Heart left ventricle (tissue), 16 donors: ENCODE measurements at regions of chr22 and their contacts with region 1.

Region 1: DNA sequence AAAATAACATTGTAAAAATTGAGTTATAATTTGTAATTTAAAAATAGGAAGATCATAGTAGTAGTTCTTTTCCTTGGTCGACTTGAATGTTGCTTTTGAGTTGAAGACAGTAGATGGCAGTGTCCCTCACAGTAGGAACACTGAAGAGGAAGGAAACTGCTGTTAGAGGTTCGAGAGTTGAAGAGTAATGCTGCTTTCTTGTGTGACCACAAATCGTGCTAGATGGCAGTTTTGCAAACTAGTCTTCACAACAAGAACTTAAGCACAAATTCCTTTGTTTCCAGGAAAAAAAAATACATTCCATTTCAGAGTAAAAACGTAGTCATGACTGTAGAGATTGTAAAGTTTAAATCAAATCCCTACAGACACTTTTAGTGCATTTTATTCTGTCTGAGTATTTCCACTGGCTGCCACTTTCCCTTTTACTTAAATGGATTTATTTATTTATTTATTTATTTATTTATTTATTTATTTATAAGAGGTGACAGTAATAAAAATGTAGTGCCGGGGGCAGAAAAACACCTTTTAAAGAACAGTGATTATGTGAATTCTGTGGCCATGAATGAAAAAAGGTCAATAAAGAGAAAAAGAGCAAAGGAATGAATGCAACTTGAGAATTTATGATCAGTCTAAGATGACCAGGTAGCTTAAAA is 54.6 kb downstream of the SPECC1L start:
- DNase-seq: peak in 1 of 5 donors; percentile 36
- ATAC-seq: peak in 3 of 4 donors; percentile 79 to 89 (median 82)
- H3K4me3 ChIP-seq: no peak overlapping the region
- H3K27ac ChIP-seq: peak overlapping the region in 1 of 12 donors; percentile 54
- H3K4me1 ChIP-seq: peaks cover 0 to 38% (median 15%) of the 10 kb centered on the region in 12 donors
- H3K27me3 ChIP-seq: no peaks in the 10 kb centered on the region
- CTCF ChIP-seq: peak; percentile 61 to 88 (median 74)
- POLR2A ChIP-seq: no peak

Region 2: GRCh38 chr22:24270638-24271408 is 54.4 kb before region 1 on chr22 and contains the start of gene SPECC1L:
- intact Hi-C with region 1: loop called in 1 of 10 experiments (anchors 5 kb)
- DNase-seq: peak; percentile 93 to 98 (median 96)
- ATAC-seq: peak; percentile 91 to 98 (median 96)
- H3K4me3 ChIP-seq: peak within 1 kb of the TSS; percentile 61 to 99 (median 85)
- H3K27ac ChIP-seq: peak within 1 kb of the TSS; percentile 88 to 99 (median 95)
- H3K4me1 ChIP-seq: peaks cover 7 to 42% (median 32%) of the 10 kb centered on the region in 12 donors
- H3K27me3 ChIP-seq: no peaks in the 10 kb centered on the region
- CTCF ChIP-seq: peak in 10 of 12 donors; percentile 13 to 68 (median 38)
- POLR2A ChIP-seq: peak; percentile 76 to 96
- total RNA-seq, gene SPECC1L: 25.4 to 65.3 (median 52.8) TPM

Region 3: GRCh38 chr22:24359452-24360120 is 34.4 kb after region 1 on chr22:
- intact Hi-C with region 1: no loop called
- DNase-seq: no peak
- ATAC-seq: peak in 3 of 4 donors; percentile 30 to 45 (median 40)
- H3K4me3 ChIP-seq: no peak overlapping the region
- H3K27ac ChIP-seq: peak overlapping the region in 6 of 12 donors; percentile 10 to 41 (median 19)
- H3K4me1 ChIP-seq: peaks cover 0 to 22% (median 13%) of the 10 kb centered on the region in 12 donors
- H3K27me3 ChIP-seq: no peaks in the 10 kb centered on the region
- CTCF ChIP-seq: no peak
- POLR2A ChIP-seq: no peak

Region 4: DNA sequence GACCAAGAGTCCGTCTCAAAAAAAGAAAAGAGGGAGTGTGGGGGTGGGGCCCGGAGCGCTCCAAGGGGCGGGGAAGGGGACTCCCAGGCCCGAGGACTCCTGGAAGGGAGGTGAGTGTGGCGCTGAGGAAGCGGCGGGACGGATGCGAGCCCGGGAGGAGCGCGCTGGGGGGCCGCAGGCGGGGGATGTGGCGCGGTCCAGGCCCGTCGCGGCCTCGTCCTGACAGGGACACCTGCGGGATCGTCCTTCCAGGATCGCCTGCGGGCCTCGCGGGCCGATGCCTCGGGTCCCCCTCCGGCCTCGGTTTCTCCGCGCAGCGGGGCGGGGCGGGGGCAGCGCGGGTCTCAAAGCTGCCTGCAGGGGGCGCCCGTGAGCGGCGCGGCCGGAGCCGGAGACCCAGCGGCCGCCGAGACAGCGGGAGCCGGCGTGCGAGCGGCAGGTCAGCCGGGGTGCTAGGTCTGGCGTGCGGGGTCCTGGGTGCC is 98.3 kb after region 1 on chr22:
- intact Hi-C with region 1: loop called in 4 of 10 experiments (anchors 5 kb)
- DNase-seq: peak; percentile 62 to 88 (median 73)
- ATAC-seq: peak in 3 of 4 donors; percentile 18 to 80 (median 69)
- H3K4me3 ChIP-seq: peak overlapping the region; percentile 56 to 96 (median 71)
- H3K27ac ChIP-seq: peak overlapping the region in 10 of 12 donors; percentile 36 to 88 (median 70)
- H3K4me1 ChIP-seq: peaks cover 0 to 86% (median 43%) of the 10 kb centered on the region in 12 donors
- H3K27me3 ChIP-seq: no peaks in the 10 kb centered on the region
- CTCF ChIP-seq: peak; percentile 76 to 98 (median 92)
- POLR2A ChIP-seq: no peak

Region 5: GRCh38 chr22:24482575-24482974 is 157.3 kb after region 1 on chr22:
- intact Hi-C with region 1: loop called in 5 of 10 experiments (anchors 5 to 10 kb)
- DNase-seq: no peak
- ATAC-seq: peak in 2 of 4 donors; percentile 48 to 69
- H3K4me3 ChIP-seq: no peak overlapping the region
- H3K27ac ChIP-seq: no peak overlapping the region
- H3K4me1 ChIP-seq: peaks cover 0 to 37% (median 5%) of the 10 kb centered on the region in 12 donors
- H3K27me3 ChIP-seq: no peaks in the 10 kb centered on the region
- CTCF ChIP-seq: no peak
- POLR2A ChIP-seq: no peak

Region 6: DNA sequence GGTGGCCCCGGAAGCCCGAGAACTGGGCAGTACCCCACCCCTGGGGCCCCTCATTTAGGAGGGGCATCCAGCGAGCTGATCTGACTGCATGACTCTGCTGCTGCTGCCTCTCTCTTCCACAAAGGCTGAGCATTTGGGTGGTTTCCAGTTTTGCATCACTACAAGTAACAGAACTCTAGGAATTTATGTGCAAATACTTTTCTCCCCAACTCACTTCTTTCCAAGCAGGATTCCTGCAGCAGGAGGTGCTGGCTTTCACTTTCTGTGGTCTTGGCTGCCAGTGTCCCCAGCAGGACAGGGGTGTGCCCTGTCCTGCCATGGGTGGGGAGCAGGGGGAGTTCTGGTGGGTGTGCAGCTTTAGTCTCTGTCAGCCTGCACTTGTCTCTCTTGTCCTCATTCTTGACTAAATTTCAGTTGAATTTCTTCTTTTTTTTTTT is 191.1 kb after region 1 on chr22:
- intact Hi-C with region 1: loop called in 4 of 10 experiments (anchors 5 kb)
- DNase-seq: peak in 1 of 5 donors; percentile 18
- ATAC-seq: no peak
- H3K4me3 ChIP-seq: no peak overlapping the region
- H3K27ac ChIP-seq: no peak overlapping the region
- H3K4me1 ChIP-seq: peaks cover 0 to 32% (median 13%) of the 10 kb centered on the region in 12 donors
- H3K27me3 ChIP-seq: no peaks in the 10 kb centered on the region
- CTCF ChIP-seq: no peak
- POLR2A ChIP-seq: no peak

Region 7: GRCh38 chr22:24685531-24686190 is 360.4 kb after region 1 on chr22:
- intact Hi-C with region 1: no loop called
- DNase-seq: peak in 2 of 5 donors; percentile 46 to 72
- ATAC-seq: peak in 3 of 4 donors; percentile 59 to 73 (median 69)
- H3K4me3 ChIP-seq: peak overlapping the region in 10 of 12 donors; percentile 3 to 44 (median 30)
- H3K27ac ChIP-seq: peak overlapping the region in 5 of 12 donors; percentile 5 to 61 (median 39)
- H3K4me1 ChIP-seq: peaks cover 0 to 15% (median 0%) of the 10 kb centered on the region in 12 donors
- H3K27me3 ChIP-seq: peaks cover 0 to 22% (median 0%) of the 10 kb centered on the region in 9 donors
- CTCF ChIP-seq: no peak
- POLR2A ChIP-seq: no peak

Region 8: GRCh38 chr22:24758164-24758799 is 433.1 kb after region 1 on chr22:
- intact Hi-C with region 1: loop called in 1 of 10 experiments (anchors 10 kb)
- DNase-seq: peak in 4 of 5 donors; percentile 41 to 50 (median 42)
- ATAC-seq: no peak
- H3K4me3 ChIP-seq: no peak overlapping the region
- H3K27ac ChIP-seq: no peak overlapping the region
- H3K4me1 ChIP-seq: no peaks in the 10 kb centered on the region
- H3K27me3 ChIP-seq: peaks cover 0 to 15% (median 0%) of the 10 kb centered on the region in 9 donors
- CTCF ChIP-seq: peak; percentile 79 to 97 (median 90)
- POLR2A ChIP-seq: no peak